ENCODE measurements at regions of chr9 and their contacts with region 1.

Region 1: GRCh38 chr9:105318729-105319191 is 74.3 kb downstream of the SLC44A1 start:
- DNase-seq: peak; percentile 40
- ATAC-seq: peak; percentile 91
- H3K4me3 ChIP-seq: no peak overlapping the region
- H3K27ac ChIP-seq: no peak overlapping the region
- H3K4me1 ChIP-seq: peaks cover 8% of the 10 kb centered on the region
- H3K27me3 ChIP-seq: no peaks in the 10 kb centered on the region
- CTCF ChIP-seq: no peak
- EP300 ChIP-seq: peak in 1 of 2 experiments; percentile 29; a peak in 1 of 4 replicates
- POLR2A ChIP-seq: no peak
- RAD21 ChIP-seq: no peak

Region 2: GRCh38 chr9:105157130-105157583 is 161.6 kb before region 1 on chr9:
- CTCF ChIA-PET with region 1: no interaction called
- POLR2A ChIA-PET with region 1: no interaction called
- RAD21 ChIA-PET with region 1: no interaction called
- SMC1A ChIA-PET with region 1: no interaction called
- in situ Hi-C with region 1: no loop called
- intact Hi-C with region 1: no loop called
- DNase-seq: no peak
- ATAC-seq: peak; percentile 93
- H3K4me3 ChIP-seq: no peak overlapping the region
- H3K27ac ChIP-seq: no peak overlapping the region
- H3K4me1 ChIP-seq: no peaks in the 10 kb centered on the region
- H3K27me3 ChIP-seq: no peaks in the 10 kb centered on the region
- CTCF ChIP-seq: peak; percentile 27 to 54 (median 40); a peak in 4 of 6 replicates
- EP300 ChIP-seq: no peak
- POLR2A ChIP-seq: no peak
- RAD21 ChIP-seq: peak; percentile 63

Region 3: DNA sequence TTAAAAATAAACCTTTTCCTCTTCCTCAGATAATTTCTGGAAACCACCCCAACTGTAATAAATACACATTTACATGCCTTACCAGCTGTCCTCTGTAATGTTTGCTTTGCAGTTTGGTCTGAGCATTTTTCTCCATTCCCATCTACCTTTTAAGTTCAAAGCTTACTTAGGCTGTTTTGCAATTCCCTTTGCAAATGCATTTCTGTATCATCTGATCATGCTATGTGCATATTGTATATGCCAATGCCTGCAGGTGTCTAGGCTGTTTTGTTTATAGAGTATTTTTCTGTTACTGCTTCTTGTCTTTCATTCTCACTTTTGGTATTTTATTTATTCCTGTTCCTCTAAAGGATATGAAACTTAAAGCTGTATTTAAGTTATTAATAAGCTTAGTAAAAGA is 12.0 kb after region 1 on chr9:
- CTCF ChIA-PET with region 1: interaction called, 5 read pairs
- POLR2A ChIA-PET with region 1: interaction called, 3 read pairs
- RAD21 ChIA-PET with region 1: interaction called, 20 read pairs
- SMC1A ChIA-PET with region 1: interaction called, 9 read pairs
- in situ Hi-C with region 1: no loop called
- intact Hi-C with region 1: no loop called
- DNase-seq: no peak
- ATAC-seq: peak; percentile 54
- H3K4me3 ChIP-seq: 0 out of 2 replicates have a peak overlapping the region, but pooled peaks have one; percentile 12
- H3K27ac ChIP-seq: peak overlapping the region; percentile 8; the same call in 1 of the 2 replicates
- H3K4me1 ChIP-seq: 0 out of 2 replicates have a peak, but pooled peaks cover 6% of the 10 kb centered on the region
- H3K27me3 ChIP-seq: no peaks in the 10 kb centered on the region
- CTCF ChIP-seq: no peak
- EP300 ChIP-seq: no peak
- POLR2A ChIP-seq: no peak
- RAD21 ChIP-seq: no peak

Region 4: DNA sequence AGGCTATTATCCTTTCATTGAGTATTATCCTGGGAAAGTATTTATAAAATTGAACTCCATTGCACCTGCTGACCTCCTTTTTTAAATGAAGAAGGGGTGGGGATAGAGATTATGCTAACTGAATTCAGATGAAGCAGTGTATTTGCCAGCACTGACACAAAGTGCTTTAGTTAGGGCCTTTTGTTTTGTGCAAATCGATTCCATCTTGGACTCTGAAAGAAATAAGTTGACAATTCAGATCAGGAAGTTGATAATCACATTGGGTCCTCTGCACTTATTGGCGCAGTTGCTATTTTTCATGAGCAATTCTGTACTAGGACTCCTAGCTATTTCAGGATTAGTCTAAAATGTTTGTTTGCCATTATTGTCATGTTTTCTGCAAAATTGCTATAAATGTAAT is 27.5 kb after region 1 on chr9:
- CTCF ChIA-PET with region 1: no interaction called
- POLR2A ChIA-PET with region 1: no interaction called
- RAD21 ChIA-PET with region 1: no interaction called
- SMC1A ChIA-PET with region 1: no interaction called
- in situ Hi-C with region 1: no loop called
- intact Hi-C with region 1: no loop called
- DNase-seq: no peak
- ATAC-seq: no peak
- H3K4me3 ChIP-seq: no peak overlapping the region
- H3K27ac ChIP-seq: no peak overlapping the region
- H3K4me1 ChIP-seq: peaks cover 4% of the 10 kb centered on the region; the same call in 1 of the 2 replicates
- H3K27me3 ChIP-seq: no peaks in the 10 kb centered on the region
- CTCF ChIP-seq: no peak
- EP300 ChIP-seq: no peak
- POLR2A ChIP-seq: no peak
- RAD21 ChIP-seq: no peak